ENCODE measurements at regions of chr6 and their contacts with region 1.

Region 1: DNA sequence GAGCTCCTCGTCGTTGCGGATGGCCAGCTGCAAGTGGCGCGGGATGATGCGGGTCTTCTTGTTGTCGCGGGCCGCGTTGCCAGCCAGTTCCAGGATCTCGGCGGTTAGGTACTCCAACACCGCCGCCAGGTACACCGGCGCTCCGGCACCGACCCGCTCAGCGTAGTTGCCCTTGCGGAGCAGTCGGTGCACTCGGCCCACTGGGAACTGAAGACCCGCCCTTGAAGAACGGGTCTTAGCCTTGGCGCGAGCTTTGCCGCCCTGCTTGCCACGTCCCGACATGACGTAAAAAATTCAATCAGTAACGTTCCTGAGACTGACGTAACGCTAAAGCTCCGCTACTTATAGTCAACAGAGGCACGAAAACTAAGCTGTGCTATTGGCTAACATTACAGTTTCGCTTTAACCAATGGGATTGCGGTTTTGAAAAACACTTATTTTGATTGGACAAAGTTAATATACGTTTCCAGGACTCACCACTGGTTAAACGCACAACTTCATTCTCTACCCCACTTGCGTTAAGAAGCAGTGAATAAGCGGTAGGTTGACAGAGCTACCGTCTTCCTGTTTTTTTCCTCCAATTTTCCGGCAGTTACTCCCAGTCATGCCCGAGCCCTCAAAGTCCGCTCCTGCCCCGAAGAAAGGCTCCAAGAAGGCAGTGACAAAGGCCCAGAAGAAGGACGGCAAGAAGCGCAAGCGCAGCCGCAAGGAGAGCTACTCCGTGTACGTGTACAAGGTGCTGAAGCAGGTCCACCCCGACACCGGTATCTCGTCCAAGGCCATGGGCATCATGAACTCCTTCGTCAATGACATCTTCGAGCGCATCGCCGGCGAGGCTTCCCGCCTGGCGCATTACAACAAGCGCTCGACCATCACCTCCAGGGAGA is 73.9 kb downstream of the OR2B2 start:
- DNase-seq: peak; percentile 99
- H3K4me3 ChIP-seq: peak overlapping the region; percentile 87
- H3K27ac ChIP-seq: peak overlapping the region; percentile 97
- H3K4me1 ChIP-seq: peaks cover 37% of the 10 kb centered on the region
- CTCF ChIP-seq: no peak

Region 2: GRCh38 chr6:26045065-26045927 is 1793.0 kb before region 1 on chr6:
- CTCF ChIA-PET with region 1: no interaction called
- POLR2A ChIA-PET with region 1: interaction called, 16 read pairs
- intact Hi-C with region 1: no loop called
- DNase-seq: peak; percentile 97
- H3K4me3 ChIP-seq: peak overlapping the region; percentile 67
- H3K27ac ChIP-seq: peak overlapping the region; percentile 99
- H3K4me1 ChIP-seq: peaks cover 66% of the 10 kb centered on the region
- CTCF ChIP-seq: peak; percentile 54

Region 3: GRCh38 chr6:27031302-27031701 is 807.0 kb before region 1 on chr6:
- CTCF ChIA-PET with region 1: no interaction called
- POLR2A ChIA-PET with region 1: no interaction called
- intact Hi-C with region 1: no loop called
- DNase-seq: no peak
- H3K4me3 ChIP-seq: no peak overlapping the region
- H3K27ac ChIP-seq: no peak overlapping the region
- H3K4me1 ChIP-seq: no peaks in the 10 kb centered on the region
- CTCF ChIP-seq: no peak

Region 4: GRCh38 chr6:27825025-27825793 is 13.1 kb before region 1 on chr6:
- CTCF ChIA-PET with region 1: no interaction called
- POLR2A ChIA-PET with region 1: interaction called, 174 read pairs
- intact Hi-C with region 1: no loop called
- DNase-seq: peak; percentile 72
- H3K4me3 ChIP-seq: peak overlapping the region; percentile 71
- H3K27ac ChIP-seq: peak overlapping the region; percentile 93
- H3K4me1 ChIP-seq: peaks cover 46% of the 10 kb centered on the region
- CTCF ChIP-seq: no peak

Region 5: DNA sequence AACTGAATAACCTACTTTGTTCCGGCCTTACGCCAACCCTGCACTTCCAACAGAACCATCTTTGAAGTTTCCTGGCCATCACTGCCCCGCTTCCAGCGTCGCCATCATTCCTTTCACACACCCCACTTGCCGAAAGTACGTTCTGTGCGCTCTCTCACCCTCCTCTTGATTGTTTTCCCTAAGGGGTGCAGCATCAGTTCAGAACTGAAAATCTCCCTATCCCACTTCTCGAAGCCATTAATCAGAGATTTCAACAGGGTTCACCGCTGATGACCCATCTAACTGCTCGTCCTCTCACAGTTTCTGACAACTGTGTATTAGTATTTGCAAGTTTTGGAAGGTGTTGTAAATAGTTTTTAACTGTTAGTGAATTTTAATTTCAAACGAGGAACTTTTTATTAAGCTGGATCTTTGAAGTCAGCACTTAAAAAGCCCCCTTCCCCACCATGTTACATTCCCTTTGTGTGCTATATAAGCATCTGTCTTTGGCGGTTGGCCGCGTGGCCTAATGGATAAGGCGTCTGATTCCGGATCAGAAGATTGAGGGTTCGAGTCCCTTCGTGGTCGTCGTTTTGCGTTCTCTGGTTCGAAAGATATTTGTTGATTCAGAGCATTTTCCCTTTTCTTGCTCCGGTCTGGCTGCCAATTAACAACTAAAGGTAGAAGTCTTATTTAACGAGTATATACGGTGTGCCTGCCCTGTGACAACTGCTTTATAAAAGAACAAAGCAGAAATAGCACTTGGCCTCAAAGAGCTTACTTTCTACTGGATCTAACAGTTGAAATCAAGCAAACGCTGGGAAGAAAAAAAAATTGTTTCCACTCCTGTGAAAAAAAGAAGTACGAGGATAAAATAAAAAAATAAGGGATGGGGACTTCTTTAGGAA is 1042.8 kb after region 1 on chr6:
- CTCF ChIA-PET with region 1: no interaction called
- POLR2A ChIA-PET with region 1: no interaction called
- intact Hi-C with region 1: loop called (anchors 10 kb)
- DNase-seq: peak; percentile 72
- H3K4me3 ChIP-seq: peak overlapping the region; percentile 50
- H3K27ac ChIP-seq: peak overlapping the region; percentile 61
- H3K4me1 ChIP-seq: peaks cover 64% of the 10 kb centered on the region
- CTCF ChIP-seq: no peak